Activated T-helper 1 cell treated with anti-CD3 and anti-CD28 coated beads, Interleukin-12 subunit alpha, Interleukin-12 subunit beta, Interleukin-2, Interleukin-4 antibody, amounts not matched to agents 30 ng/mL and 10 ng/mL and 1 ng/mL, durations not matched to agents 14 hours and 24 hours and 36 hours (primary cell): ENCODE measurements at regions of chr18 and their contacts with region 1.

Region 1: DNA sequence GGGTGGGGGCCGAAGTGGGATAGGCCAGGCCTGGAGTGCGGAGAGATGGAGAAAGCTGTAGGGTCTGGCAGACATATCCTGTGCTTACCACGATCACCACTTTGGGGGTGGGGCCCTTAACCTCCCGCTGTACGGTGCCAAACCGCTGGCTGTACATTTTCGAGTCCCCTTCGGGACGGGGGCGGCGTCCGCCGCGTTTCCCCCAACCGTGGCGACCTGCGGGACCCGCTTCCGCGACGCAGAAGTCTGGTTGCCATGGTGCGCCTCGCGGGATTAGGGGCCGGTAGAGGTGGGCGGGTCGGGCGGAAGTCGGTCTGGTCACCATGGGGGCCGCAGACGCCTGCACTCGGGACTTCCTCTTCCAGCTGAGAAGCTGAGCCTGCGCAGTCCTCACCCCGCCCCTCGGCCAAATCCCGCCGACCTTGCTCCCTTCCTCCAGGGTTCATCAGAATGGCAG is at the start of gene CFAP53:
- DNase-seq: peak; percentile 77
- H3K4me3 Mint-ChIP-seq: peak within 1 kb of the TSS; percentile 86
- H3K27ac Mint-ChIP-seq: peak within 1 kb of the TSS; percentile 70
- H3K4me1 Mint-ChIP-seq: peaks cover 30% of the 10 kb centered on the region
- H3K27me3 Mint-ChIP-seq: peaks cover 3% of the 10 kb centered on the region
- total RNA-seq, gene CFAP53: 0.31 and 0.34 TPM in 2 replicates

Region 2: GRCh38 chr18:49486953-49487710 is 779.1 kb before region 1 on chr18 and contains the start of gene C18orf32:
- intact Hi-C with region 1: loop called (anchors 5 kb)
- DNase-seq: peak; percentile 92
- H3K4me3 Mint-ChIP-seq: peak within 1 kb of the TSS; percentile 93
- H3K27ac Mint-ChIP-seq: peak within 1 kb of the TSS; percentile 98
- H3K4me1 Mint-ChIP-seq: peaks cover 53% of the 10 kb centered on the region
- H3K27me3 Mint-ChIP-seq: no peaks in the 10 kb centered on the region
- total RNA-seq, gene C18orf32: 28.7 and 31.2 TPM in 2 replicates

Region 3: DNA sequence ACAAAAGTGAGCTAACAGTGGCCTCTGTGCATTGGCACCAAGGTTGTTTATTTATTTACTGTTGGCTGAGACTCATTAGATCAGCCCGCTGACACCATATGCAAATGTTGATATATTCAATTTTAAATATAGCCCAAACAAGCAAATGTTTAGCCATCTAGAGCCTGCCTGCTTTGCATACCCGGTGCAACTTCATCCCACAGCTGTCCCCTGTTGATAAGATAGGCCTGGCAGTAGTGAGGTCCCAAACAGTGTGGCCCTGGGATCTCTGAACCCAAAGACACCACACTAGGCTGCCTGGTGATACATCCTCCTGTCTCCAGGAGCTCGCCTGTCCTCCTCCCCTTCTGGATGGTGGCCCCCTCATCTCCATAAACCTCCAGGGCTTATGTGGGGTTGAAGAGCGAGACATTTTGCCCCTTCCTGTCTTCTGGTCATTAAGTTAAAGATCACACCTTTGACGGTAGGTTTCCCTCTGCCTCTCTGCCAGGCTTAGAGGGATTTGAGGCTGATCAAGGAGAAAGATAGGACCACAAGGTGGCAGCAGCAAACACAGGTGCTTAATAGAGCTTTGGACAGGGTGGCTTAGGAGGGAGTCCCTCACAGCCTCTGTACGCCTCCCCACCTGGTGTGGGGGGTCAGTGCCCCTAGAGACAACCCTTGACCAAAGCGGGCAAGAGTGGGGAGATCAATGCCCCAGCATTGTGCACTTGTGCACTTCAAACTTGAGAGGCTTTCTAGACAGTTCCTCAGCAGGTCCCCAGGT is 47.7 kb before region 1 on chr18:
- intact Hi-C with region 1: loop called (anchors 1 kb)
- DNase-seq: peak; percentile 8
- H3K4me3 Mint-ChIP-seq: no peak overlapping the region
- H3K27ac Mint-ChIP-seq: no peak overlapping the region
- H3K4me1 Mint-ChIP-seq: no peaks in the 10 kb centered on the region
- H3K27me3 Mint-ChIP-seq: peaks cover 14% of the 10 kb centered on the region

Region 4: GRCh38 chr18:50307738-50308470 is 41.6 kb after region 1 on chr18:
- intact Hi-C with region 1: loop called (anchors 1 kb)
- DNase-seq: peak; percentile 85
- H3K4me3 Mint-ChIP-seq: peak overlapping the region; percentile 90
- H3K27ac Mint-ChIP-seq: peak overlapping the region; percentile 57
- H3K4me1 Mint-ChIP-seq: peaks cover 18% of the 10 kb centered on the region
- H3K27me3 Mint-ChIP-seq: peaks cover 27% of the 10 kb centered on the region

Region 5: DNA sequence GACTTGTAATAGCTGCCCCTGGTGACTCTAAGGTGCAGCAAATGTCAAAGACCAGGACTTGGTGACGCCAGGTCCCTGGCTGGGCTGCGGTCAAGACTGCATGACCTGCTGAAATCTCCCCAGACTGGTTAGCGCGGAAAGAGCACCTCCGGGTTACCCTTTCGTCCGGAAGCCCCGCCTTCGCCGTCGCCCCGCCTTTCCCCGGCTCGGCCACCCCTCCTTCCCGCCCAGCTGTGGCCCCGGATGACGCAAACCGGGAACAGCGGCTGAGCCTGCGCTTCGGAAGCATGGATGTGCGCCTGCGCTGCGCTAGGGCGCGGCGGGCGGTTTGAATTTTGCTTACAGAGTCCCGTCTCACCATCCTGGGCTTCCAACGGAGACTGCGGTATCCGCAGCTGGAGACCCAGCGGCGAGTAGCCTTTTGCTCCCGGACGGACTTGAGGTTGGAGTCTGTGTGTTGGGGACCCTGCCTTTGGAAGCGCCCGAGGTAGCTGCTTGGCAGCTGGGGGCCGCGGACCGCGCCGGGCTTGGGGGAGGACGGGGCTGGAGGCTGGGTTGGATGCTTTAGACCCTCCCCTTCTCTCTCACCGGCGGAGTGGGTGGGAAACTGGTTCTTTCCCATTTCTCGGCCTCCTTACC is 108.6 kb after region 1 on chr18 and contains the start of gene SKA1:
- intact Hi-C with region 1: loop called (anchors 1 kb)
- DNase-seq: peak; percentile 89
- H3K4me3 Mint-ChIP-seq: peak within 1 kb of the TSS; percentile 91
- H3K27ac Mint-ChIP-seq: peak within 1 kb of the TSS; percentile 81
- H3K4me1 Mint-ChIP-seq: peaks cover 23% of the 10 kb centered on the region
- H3K27me3 Mint-ChIP-seq: peaks cover 2% of the 10 kb centered on the region
- total RNA-seq, gene SKA1: 20.7 and 23.3 TPM in 2 replicates